ENCODE measurements at regions of chr6 and their contacts with region 1.

Region 1: GRCh38 chr6:12605888-12606345 is 110.7 kb upstream of the PHACTR1 start:
- DNase-seq: no peak
- ATAC-seq: peak; percentile 94
- H3K4me3 ChIP-seq: no peak overlapping the region
- H3K27ac ChIP-seq: no peak overlapping the region
- H3K4me1 ChIP-seq: no peaks in the 10 kb centered on the region
- H3K27me3 ChIP-seq: no peaks in the 10 kb centered on the region
- CTCF ChIP-seq: peak; percentile 71

Region 2: GRCh38 chr6:11585426-11586016 is 1020.4 kb before region 1 on chr6:
- intact Hi-C with region 1: loop called (anchors 10 kb)
- DNase-seq: no peak
- ATAC-seq: peak; percentile 65
- H3K4me3 ChIP-seq: no peak overlapping the region
- H3K27ac ChIP-seq: no peak overlapping the region
- H3K4me1 ChIP-seq: peaks cover 10% of the 10 kb centered on the region
- H3K27me3 ChIP-seq: no peaks in the 10 kb centered on the region
- CTCF ChIP-seq: peak; percentile 66

Region 3: DNA sequence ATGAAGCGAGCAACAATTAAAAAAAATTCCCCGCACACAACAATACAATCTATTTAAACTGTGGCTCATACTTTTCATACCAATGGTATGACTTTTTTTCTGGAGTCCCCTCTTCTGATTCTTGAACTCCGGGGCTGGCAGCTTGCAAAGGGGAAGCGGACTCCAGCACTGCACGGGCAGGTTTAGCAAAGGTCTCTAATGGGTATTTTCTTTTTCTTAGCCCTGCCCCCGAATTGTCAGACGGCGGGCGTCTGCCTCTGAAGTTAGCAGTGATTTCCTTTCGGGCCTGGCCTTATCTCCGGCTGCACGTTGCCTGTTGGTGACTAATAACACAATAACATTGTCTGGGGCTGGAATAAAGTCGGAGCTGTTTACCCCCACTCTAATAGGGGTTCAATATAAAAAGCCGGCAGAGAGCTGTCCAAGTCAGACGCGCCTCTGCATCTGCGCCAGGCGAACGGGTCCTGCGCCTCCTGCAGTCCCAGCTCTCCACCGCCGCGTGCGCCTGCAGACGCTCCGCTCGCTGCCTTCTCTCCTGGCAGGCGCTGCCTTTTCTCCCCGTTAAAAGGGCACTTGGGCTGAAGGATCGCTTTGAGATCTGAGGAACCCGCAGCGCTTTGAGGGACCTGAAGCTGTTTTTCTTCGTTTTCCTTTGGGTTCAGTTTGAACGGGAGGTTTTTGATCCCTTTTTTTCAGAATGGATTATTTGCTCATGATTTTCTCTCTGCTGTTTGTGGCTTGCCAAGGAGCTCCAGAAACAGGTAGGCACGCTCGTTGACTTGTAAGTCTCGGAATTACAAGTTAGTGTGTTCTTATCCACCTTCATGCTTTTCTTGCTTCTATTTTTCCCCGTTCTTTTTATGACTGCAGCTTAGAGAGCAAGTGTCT is 315.7 kb before region 1 on chr6 and contains the start of gene EDN1:
- intact Hi-C with region 1: loop called (anchors 10 kb)
- DNase-seq: peak; percentile 91
- ATAC-seq: peak; percentile 83
- H3K4me3 ChIP-seq: peak within 1 kb of the TSS; percentile 53
- H3K27ac ChIP-seq: peak within 1 kb of the TSS; percentile 77
- H3K4me1 ChIP-seq: peaks cover 3% of the 10 kb centered on the region
- H3K27me3 ChIP-seq: no peaks in the 10 kb centered on the region
- CTCF ChIP-seq: peak; percentile 57
- total RNA-seq, gene EDN1: 18.8 TPM

Measured in upper lobe of right lung (tissue), 1 donor.